ENCODE measurements at regions of chr16 and their contacts with region 1.

Region 1: DNA sequence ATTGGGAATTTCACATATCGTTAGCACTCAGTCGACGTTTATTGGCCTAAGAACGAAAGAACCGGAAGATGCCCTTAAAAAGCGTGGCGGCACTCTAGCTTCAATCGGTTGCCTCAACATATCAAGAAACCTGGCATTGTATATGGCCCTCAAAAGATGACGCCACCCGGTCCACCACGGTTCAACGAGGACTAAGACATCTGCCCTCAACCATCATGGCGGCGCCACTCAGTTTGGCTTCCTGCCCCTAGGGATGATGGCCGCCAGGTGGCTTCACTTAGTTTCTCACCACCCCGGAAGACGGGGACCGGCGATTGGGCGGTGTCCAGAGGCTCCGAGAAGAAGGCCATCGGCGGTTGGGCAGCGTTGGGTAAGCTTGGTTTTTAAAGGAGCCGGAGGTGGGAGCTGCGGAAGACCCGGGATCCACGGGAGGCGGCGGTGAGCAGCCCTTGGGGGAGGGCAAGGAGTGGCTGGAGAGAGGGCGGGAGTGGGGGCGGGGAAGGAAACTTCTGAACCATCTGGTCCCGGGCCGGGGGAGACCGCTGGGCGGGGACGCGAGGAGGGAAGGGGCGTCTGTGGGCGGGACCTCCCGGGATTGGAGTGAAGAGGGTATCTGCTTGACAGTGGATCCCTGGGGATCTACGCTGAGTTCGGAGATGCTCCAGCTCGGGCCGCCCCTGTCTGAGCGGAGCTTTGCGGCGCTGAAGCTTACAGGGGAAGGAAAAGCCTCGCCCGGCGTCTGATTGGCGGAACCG is at the start of gene PRR14:
- DNase-seq: peak; percentile 98
- ATAC-seq: peak; percentile 89
- H3K4me3 Mint-ChIP-seq: peak within 1 kb of the TSS; percentile 97
- H3K27ac Mint-ChIP-seq: peak within 1 kb of the TSS; percentile 98
- H3K4me1 Mint-ChIP-seq: peaks cover 15% of the 10 kb centered on the region
- H3K27me3 Mint-ChIP-seq: peaks cover 43% of the 10 kb centered on the region
- CTCF ChIP-seq: 0 out of 2 replicates have a peak, but pooled peaks have one; percentile 16
- total RNA-seq, gene PRR14: 21.9 to 24.3 TPM (median 22.0 TPM) in 3 replicates

Region 2: GRCh38 chr16:30417529-30418349 is 232.8 kb before region 1 on chr16:
- CTCF ChIA-PET with region 1: interaction called, 10 read pairs
- POLR2A ChIA-PET with region 1: no interaction called
- DNase-seq: peak; percentile 88
- ATAC-seq: peak; percentile 88
- H3K4me3 Mint-ChIP-seq: peak overlapping the region; percentile 54
- H3K27ac Mint-ChIP-seq: no peak overlapping the region
- H3K4me1 Mint-ChIP-seq: peaks cover 9% of the 10 kb centered on the region
- H3K27me3 Mint-ChIP-seq: no peaks in the 10 kb centered on the region
- CTCF ChIP-seq: no peak

Region 3: GRCh38 chr16:30637942-30638341 is 12.6 kb before region 1 on chr16:
- CTCF ChIA-PET with region 1: interaction called, 10 read pairs
- POLR2A ChIA-PET with region 1: interaction called, 5 read pairs
- DNase-seq: no peak
- ATAC-seq: peak; percentile 16
- H3K4me3 Mint-ChIP-seq: no peak overlapping the region
- H3K27ac Mint-ChIP-seq: no peak overlapping the region
- H3K4me1 Mint-ChIP-seq: peaks cover 7% of the 10 kb centered on the region
- H3K27me3 Mint-ChIP-seq: peaks cover 3% of the 10 kb centered on the region
- CTCF ChIP-seq: no peak

Region 4: DNA sequence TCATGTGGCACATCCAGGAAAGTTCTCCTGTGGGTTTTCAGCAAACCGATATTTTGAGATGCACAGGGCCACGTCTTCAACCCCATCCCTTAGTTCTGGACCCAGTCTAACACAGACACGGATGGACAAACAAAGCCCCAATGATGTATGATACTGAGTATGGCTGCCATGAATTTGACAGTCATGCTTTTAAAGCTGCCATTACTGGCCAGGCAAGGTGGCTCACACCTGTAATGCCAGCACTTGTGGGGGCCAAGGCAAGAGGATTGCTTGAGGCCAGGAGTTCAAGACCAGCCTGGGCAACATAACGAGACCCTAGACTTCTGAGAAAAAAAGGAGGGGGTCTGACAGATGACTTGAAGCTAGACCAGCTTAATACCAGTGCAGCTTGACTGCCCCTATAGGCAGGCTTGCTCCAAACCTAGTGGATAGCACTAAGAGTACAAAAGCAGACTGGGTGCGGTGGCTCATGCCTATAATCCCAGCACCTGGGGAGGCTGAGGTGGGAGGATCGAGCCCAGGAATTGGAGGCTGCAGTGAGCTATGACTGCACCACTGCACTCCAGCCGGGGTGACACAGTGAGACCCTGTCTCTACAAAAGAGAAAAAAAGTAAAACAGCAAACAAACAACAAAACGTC is 147.2 kb after region 1 on chr16:
- CTCF ChIA-PET with region 1: no interaction called
- POLR2A ChIA-PET with region 1: no interaction called
- DNase-seq: no peak
- ATAC-seq: peak; percentile 90
- H3K4me3 Mint-ChIP-seq: no peak overlapping the region
- H3K27ac Mint-ChIP-seq: no peak overlapping the region
- H3K4me1 Mint-ChIP-seq: 0 out of 2 replicates have a peak, but pooled peaks cover 4% of the 10 kb centered on the region
- H3K27me3 Mint-ChIP-seq: peaks cover 39% of the 10 kb centered on the region
- CTCF ChIP-seq: no peak

Region 5: GRCh38 chr16:30813821-30814189 is 163.3 kb after region 1 on chr16:
- CTCF ChIA-PET with region 1: no interaction called
- POLR2A ChIA-PET with region 1: no interaction called
- DNase-seq: no peak
- ATAC-seq: no peak
- H3K4me3 Mint-ChIP-seq: peak overlapping the region; percentile 65
- H3K27ac Mint-ChIP-seq: no peak overlapping the region
- H3K4me1 Mint-ChIP-seq: peaks cover 6% of the 10 kb centered on the region; the same call in 1 of the 2 replicates
- H3K27me3 Mint-ChIP-seq: peaks cover 38% of the 10 kb centered on the region
- CTCF ChIP-seq: no peak